B cell (primary cell): ENCODE measurements at regions of chr15 and their contacts with region 1.

Region 1: GRCh38 chr15:78909791-78910228 is 35.0 kb downstream of the CTSH start:
- DNase-seq: peak; percentile 71
- ATAC-seq: peak; percentile 50
- H3K4me3 ChIP-seq: no peak overlapping the region
- H3K4me3 Mint-ChIP-seq: no peak overlapping the region
- H3K27ac ChIP-seq: no peak overlapping the region
- H3K27ac Mint-ChIP-seq: peak overlapping the region; percentile 18
- H3K4me1 ChIP-seq: no peaks in the 10 kb centered on the region
- H3K4me1 Mint-ChIP-seq: peaks cover 18% of the 10 kb centered on the region
- H3K27me3 ChIP-seq: no peaks in the 10 kb centered on the region
- H3K27me3 Mint-ChIP-seq: no peaks in the 10 kb centered on the region
- CTCF ChIP-seq: peak; percentile 79

Region 2: DNA sequence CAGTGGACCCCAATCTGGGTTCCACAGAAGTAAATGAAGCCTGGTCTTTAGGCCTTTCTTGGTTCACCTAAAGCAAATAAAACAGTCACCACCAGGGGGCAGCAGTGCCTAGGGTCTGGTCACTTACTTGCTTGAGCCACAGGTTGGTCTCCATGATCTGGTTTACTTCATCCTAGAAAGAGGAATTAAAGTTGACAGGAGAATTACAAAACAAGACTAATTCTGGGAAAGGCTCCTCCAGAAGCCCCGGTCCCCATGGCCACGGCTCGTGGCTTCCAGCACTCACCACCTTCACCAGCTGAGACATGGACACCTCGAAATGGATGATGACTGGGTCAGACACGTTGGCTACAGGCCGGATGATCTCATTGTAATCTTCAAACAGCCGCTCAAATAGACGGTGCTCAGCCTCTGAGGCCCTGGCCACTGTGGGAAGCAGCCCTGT is 291.3 kb before region 1 on chr15:
- CTCF ChIA-PET with region 1: no interaction called
- POLR2A ChIA-PET with region 1: no interaction called
- intact Hi-C with region 1: loop called (anchors 10 kb)
- DNase-seq: peak; percentile 82
- ATAC-seq: peak; percentile 66
- H3K4me3 ChIP-seq: no peak overlapping the region
- H3K4me3 Mint-ChIP-seq: peak overlapping the region; percentile 37
- H3K27ac ChIP-seq: no peak overlapping the region
- H3K27ac Mint-ChIP-seq: no peak overlapping the region
- H3K4me1 ChIP-seq: peaks cover 4 to 13% of the 10 kb centered on the region in 2 donors
- H3K4me1 Mint-ChIP-seq: peaks cover 4% of the 10 kb centered on the region
- H3K27me3 ChIP-seq: peaks cover 0 to 32% (median 13%) of the 10 kb centered on the region in 4 experiments
- H3K27me3 Mint-ChIP-seq: peaks cover 34% of the 10 kb centered on the region
- CTCF ChIP-seq: peak; percentile 86

Region 3: DNA sequence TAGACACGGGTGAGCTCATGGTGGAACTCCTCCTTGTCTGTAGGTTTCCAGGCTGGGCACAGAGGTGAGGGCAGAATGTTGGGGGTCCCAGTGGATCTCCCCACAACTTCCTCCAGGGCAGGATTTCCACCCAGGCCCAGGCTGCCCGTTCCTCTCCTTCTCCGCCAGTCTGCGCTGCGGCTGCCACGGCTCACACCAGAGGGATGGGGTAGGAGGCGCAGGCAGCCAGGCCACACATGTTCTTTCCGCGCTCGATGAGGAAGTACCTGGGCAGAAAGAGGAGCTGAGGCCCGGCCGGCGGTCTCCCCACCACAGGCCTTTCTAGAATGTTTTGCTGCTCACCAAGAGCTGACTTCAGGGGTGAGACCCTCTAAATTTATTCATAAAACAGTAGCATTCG is 12.1 kb after region 1 on chr15:
- CTCF ChIA-PET with region 1: interaction called, 21 read pairs
- POLR2A ChIA-PET with region 1: no interaction called
- intact Hi-C with region 1: no loop called
- DNase-seq: no peak
- ATAC-seq: no peak
- H3K4me3 ChIP-seq: no peak overlapping the region
- H3K4me3 Mint-ChIP-seq: no peak overlapping the region
- H3K27ac ChIP-seq: no peak overlapping the region
- H3K27ac Mint-ChIP-seq: peak overlapping the region; percentile 69
- H3K4me1 ChIP-seq: no peaks in the 10 kb centered on the region
- H3K4me1 Mint-ChIP-seq: peaks cover 6% of the 10 kb centered on the region
- H3K27me3 ChIP-seq: no peaks in the 10 kb centered on the region
- H3K27me3 Mint-ChIP-seq: no peaks in the 10 kb centered on the region
- CTCF ChIP-seq: no peak

Region 4: GRCh38 chr15:78944669-78945407 is 35.0 kb after region 1 on chr15 and contains the start of gene CTSH:
- CTCF ChIA-PET with region 1: interaction called, 22 read pairs
- POLR2A ChIA-PET with region 1: no interaction called
- intact Hi-C with region 1: no loop called
- DNase-seq: peak; percentile 91
- ATAC-seq: peak; percentile 95
- H3K4me3 ChIP-seq: peak within 1 kb of the TSS; percentile 61 to 97 (median 94)
- H3K4me3 Mint-ChIP-seq: peak within 1 kb of the TSS; percentile 98
- H3K27ac ChIP-seq: peak within 1 kb of the TSS; percentile 77 to 83
- H3K27ac Mint-ChIP-seq: peak within 1 kb of the TSS; percentile 95
- H3K4me1 ChIP-seq: peaks cover 34 to 48% of the 10 kb centered on the region in 2 donors
- H3K4me1 Mint-ChIP-seq: peaks cover 32% of the 10 kb centered on the region
- H3K27me3 ChIP-seq: no peaks in the 10 kb centered on the region
- H3K27me3 Mint-ChIP-seq: no peaks in the 10 kb centered on the region
- CTCF ChIP-seq: no peak
- total RNA-seq, gene CTSH: 438 and 441 TPM in 2 replicates

Region 5: DNA sequence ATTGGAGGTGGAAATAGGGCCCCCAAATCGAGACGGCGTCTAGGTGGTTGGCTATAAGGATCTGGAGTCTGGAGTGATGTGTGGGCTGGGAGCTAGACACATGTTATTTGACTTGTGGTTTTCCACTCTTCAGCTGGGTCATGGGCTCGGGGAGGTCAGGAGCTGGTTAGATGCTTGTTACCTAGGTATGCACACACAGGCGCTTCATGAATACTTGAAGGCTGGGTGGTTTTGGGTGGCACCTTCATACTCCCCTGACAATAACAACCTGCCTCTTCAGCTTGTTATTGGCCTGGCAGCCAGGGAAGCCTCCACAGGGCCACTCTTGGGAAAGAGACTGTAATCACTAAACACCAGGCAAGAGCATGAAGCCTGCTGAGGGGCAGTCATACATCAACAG is 45.1 kb after region 1 on chr15:
- CTCF ChIA-PET with region 1: no interaction called
- POLR2A ChIA-PET with region 1: no interaction called
- intact Hi-C with region 1: no loop called
- DNase-seq: no peak
- ATAC-seq: no peak
- H3K4me3 ChIP-seq: no peak overlapping the region
- H3K4me3 Mint-ChIP-seq: no peak overlapping the region
- H3K27ac ChIP-seq: no peak overlapping the region
- H3K27ac Mint-ChIP-seq: no peak overlapping the region
- H3K4me1 ChIP-seq: peaks cover 15 to 19% of the 10 kb centered on the region in 2 donors
- H3K4me1 Mint-ChIP-seq: peaks cover 27% of the 10 kb centered on the region
- H3K27me3 ChIP-seq: no peaks in the 10 kb centered on the region
- H3K27me3 Mint-ChIP-seq: no peaks in the 10 kb centered on the region
- CTCF ChIP-seq: no peak

Region 6: GRCh38 chr15:79004336-79004735 is 94.5 kb after region 1 on chr15:
- CTCF ChIA-PET with region 1: interaction called, 43 read pairs
- POLR2A ChIA-PET with region 1: no interaction called
- intact Hi-C with region 1: loop called (anchors 1 kb)
- DNase-seq: peak; percentile 77
- ATAC-seq: peak; percentile 85
- H3K4me3 ChIP-seq: peak overlapping the region in 2 of 5 experiments; percentile 9 to 28
- H3K4me3 Mint-ChIP-seq: peak overlapping the region; percentile 81
- H3K27ac ChIP-seq: peak overlapping the region; percentile 58 to 60
- H3K27ac Mint-ChIP-seq: peak overlapping the region; percentile 95
- H3K4me1 ChIP-seq: peaks cover 30 to 45% of the 10 kb centered on the region in 2 donors
- H3K4me1 Mint-ChIP-seq: peaks cover 48% of the 10 kb centered on the region
- H3K27me3 ChIP-seq: no peaks in the 10 kb centered on the region
- H3K27me3 Mint-ChIP-seq: no peaks in the 10 kb centered on the region
- CTCF ChIP-seq: no peak

Region 7: DNA sequence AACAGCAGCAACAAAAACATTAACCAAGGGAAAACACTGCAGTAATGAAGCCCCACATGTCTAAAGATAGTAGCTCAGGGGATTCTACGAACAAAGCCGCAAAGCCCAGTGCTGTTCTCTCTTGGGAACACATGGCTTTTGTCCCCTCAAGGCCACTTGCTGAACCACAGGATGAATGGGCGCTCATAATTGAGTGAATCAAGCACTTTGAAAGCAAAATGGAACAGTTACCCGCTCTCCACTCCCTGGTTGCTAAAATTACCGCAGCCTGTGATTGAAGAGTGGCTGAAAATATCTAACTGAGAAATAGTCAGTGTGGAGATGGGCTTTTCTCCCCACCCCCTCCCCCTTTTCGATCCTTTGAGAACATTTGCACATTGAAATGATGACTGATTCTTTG is 141.2 kb after region 1 on chr15:
- CTCF ChIA-PET with region 1: no interaction called
- POLR2A ChIA-PET with region 1: no interaction called
- intact Hi-C with region 1: no loop called
- DNase-seq: no peak
- ATAC-seq: no peak
- H3K4me3 ChIP-seq: no peak overlapping the region
- H3K4me3 Mint-ChIP-seq: no peak overlapping the region
- H3K27ac ChIP-seq: no peak overlapping the region
- H3K27ac Mint-ChIP-seq: no peak overlapping the region
- H3K4me1 ChIP-seq: no peaks in the 10 kb centered on the region
- H3K4me1 Mint-ChIP-seq: no peaks in the 10 kb centered on the region
- H3K27me3 ChIP-seq: peaks cover 0 to 4% (median 0%) of the 10 kb centered on the region in 4 experiments
- H3K27me3 Mint-ChIP-seq: peaks cover 14% of the 10 kb centered on the region
- CTCF ChIP-seq: no peak